ENCODE measurements at regions of chr5 and their contacts with region 1.

Region 1: DNA sequence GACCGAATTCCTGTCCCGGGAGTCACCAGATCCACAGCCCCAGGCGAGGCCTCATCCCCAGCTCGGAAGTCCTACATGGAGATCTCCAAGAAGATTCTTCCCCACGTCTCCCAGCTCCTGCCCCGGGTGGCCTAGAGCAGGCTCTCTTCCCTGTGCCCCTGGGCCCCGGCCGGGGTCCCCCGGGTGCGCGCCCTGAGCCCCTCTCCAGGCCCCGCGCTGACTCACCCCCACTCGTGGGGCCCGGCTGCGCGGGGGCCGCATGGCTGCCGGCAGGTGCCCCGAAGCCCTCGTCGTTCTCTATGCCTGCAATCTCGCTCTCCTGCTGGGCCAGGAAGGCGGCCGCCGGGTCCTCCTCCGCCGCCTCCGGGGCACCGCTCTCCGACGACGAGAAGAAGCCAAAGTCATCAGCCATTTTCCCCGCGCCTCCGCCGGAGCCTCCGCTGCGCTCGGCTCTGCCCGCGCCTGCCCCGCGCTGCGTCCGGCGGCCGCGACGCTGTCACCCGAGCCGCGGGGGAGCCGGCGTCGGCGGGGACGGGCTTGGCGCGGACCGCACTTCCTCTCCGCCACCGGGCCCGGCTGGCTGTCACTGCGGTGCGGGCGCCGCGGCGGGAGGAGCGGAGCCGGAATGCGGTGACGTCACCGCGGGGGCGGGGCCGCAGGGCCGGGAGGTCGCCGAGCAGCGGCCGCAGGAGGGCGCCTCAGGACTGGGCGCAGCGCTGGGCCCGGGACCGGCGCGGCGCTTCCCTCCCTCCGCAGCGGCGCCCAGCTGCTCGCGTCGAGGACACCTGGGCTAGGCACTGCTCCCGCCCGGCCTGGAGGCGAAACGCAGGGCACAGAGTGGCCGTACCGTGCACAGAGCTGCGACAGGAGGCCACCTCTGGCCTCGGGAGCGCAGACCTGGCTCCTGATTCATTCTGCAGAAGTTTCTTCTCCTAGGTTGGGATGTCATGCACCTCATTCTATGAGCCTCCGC is at the start of gene CLTB:
- DNase-seq: no peak
- H3K4me3 ChIP-seq: peak within 1 kb of the TSS; percentile 94 to 97
- H3K27ac ChIP-seq: peak within 1 kb of the TSS; percentile 95
- H3K4me1 ChIP-seq: peaks cover 52% of the 10 kb centered on the region
- H3K27me3 ChIP-seq: no peaks in the 10 kb centered on the region
- CTCF ChIP-seq: peak; percentile 33 to 57 (median 54)
- POLR2A ChIP-seq: peak in 1 of 2 donors; percentile 88
- total RNA-seq, gene CLTB: 254 TPM

Region 2: DNA sequence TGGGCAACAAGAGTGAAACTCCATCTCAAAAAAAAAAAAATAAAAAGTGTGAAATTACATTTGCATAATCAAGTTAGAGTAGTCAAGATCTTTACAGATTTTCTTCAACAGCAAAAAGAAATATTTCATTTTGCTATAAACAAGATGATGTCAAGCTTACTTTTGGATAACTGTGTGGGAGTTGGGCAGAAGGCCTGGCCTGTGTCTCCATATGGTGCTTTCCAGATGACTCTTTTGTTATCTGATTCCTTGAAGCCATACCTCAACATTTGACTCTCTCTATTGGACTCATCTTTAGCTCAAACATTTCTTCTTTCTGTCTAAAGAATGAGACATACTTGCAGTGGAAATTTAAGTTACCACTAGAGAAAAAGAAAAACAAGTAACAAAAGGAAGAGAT is 1445.0 kb before region 1 on chr5:
- intact Hi-C with region 1: no loop called
- DNase-seq: no peak
- H3K4me3 ChIP-seq: no peak overlapping the region
- H3K27ac ChIP-seq: no peak overlapping the region
- H3K4me1 ChIP-seq: no peaks in the 10 kb centered on the region
- H3K27me3 ChIP-seq: no peaks in the 10 kb centered on the region
- CTCF ChIP-seq: no peak
- POLR2A ChIP-seq: no peak

Region 3: GRCh38 chr5:176361437-176362232 is 54.6 kb before region 1 on chr5 and contains the start of gene KIAA1191:
- intact Hi-C with region 1: no loop called
- DNase-seq: peak in 1 of 2 donors; percentile 94
- H3K4me3 ChIP-seq: peak within 1 kb of the TSS; percentile 90 to 92
- H3K27ac ChIP-seq: peak within 1 kb of the TSS; percentile 86
- H3K4me1 ChIP-seq: peaks cover 37% of the 10 kb centered on the region
- H3K27me3 ChIP-seq: no peaks in the 10 kb centered on the region
- CTCF ChIP-seq: no peak
- POLR2A ChIP-seq: peak in 1 of 2 donors; percentile 72
- total RNA-seq, gene KIAA1191: 99.4 TPM

Region 4: GRCh38 chr5:176543428-176544173 is 127.4 kb after region 1 on chr5:
- intact Hi-C with region 1: loop called (anchors 5 kb)
- DNase-seq: no peak
- H3K4me3 ChIP-seq: peak overlapping the region; percentile 54 to 89
- H3K27ac ChIP-seq: peak overlapping the region; percentile 65
- H3K4me1 ChIP-seq: peaks cover 31% of the 10 kb centered on the region
- H3K27me3 ChIP-seq: no peaks in the 10 kb centered on the region
- CTCF ChIP-seq: peak in 1 of 3 experiments; percentile 17
- POLR2A ChIP-seq: no peak